ENCODE measurements at regions of chr16 and their contacts with region 1.

Region 1: DNA sequence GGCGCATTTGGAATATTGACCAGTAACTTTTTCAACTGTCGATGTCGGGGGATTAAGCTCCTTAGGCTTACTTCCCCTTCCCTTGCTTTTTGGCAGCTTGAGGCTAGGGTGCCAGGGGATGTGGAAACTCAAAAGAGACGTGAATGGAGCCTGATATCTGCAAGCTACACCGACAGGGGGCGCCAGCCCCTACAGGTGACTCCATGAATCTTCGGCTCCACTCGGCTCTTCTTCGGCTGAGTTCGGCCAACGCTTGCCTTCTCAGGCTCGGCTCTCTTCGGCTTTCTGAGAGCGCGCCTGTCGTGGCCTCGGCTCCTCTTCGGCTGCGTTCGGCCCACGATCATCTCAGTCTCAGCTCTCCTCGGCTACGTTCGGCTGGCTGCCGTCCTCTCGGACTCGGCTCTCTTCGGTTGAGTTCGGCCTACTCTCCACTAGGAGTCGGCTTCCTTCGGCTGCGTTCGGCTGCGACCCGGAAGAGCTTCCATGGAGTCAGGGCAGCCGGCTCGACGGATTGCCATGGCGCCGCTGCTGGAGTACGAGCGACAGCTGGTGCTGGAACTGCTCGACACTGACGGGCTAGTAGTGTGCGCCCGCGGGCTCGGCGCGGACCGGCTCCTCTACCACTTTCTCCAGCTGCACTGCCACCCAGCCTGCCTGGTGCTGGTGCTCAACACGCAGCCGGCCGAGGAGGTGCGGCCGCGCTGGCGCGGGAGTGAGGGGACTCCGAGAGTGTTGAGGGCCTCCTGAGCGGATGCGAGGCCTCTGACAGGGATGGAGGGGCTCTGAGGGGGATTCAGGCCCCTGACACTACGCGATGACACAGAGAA is at the start of gene ERCC4:
- DNase-seq: peak; percentile 99 to 100 (median 100)
- ATAC-seq: peak; percentile 98
- H3K4me3 ChIP-seq: peak within 1 kb of the TSS; percentile 75 to 79
- H3K27ac ChIP-seq: peak within 1 kb of the TSS; percentile 68 to 91 (median 82)
- H3K4me1 ChIP-seq: peaks cover 36% of the 10 kb centered on the region
- H3K27me3 ChIP-seq: no peaks in the 10 kb centered on the region
- CTCF ChIP-seq: peak; percentile 75 to 98 (median 95)
- POLR2A ChIP-seq: peak; percentile 75 to 96 (median 90)
- total RNA-seq, gene ERCC4: 9.2 to 9.9 TPM

Region 2: DNA sequence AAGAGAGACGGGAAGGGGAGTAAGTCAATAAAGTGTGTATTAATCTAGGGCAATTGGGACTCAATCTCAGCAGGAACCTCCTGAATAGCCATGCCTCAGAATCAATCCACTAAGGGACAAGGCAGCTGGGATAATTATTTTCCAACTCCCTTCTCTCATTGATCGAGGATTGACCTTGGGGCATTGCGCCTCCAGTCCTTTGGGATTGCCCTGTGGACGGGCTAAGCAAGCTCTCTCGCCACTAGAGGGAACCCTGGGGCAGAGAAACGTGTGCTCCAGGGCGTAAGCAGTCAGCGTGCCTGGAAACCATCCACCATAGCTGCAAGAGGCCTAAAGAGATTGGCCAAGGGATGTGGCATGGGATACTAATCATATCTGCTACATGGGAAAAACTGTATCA is 53.8 kb before region 1 on chr16:
- intact Hi-C with region 1: loop called (anchors 10 kb)
- DNase-seq: peak; percentile 88 to 93 (median 92)
- ATAC-seq: peak; percentile 98
- H3K4me3 ChIP-seq: no peak overlapping the region
- H3K27ac ChIP-seq: no peak overlapping the region
- H3K4me1 ChIP-seq: peaks cover 6% of the 10 kb centered on the region
- H3K27me3 ChIP-seq: no peaks in the 10 kb centered on the region
- CTCF ChIP-seq: peak; percentile 62 to 92 (median 87)
- POLR2A ChIP-seq: no peak

Region 3: GRCh38 chr16:13961099-13961811 is 41.4 kb after region 1 on chr16:
- intact Hi-C with region 1: no loop called
- DNase-seq: no peak
- ATAC-seq: no peak
- H3K4me3 ChIP-seq: no peak overlapping the region
- H3K27ac ChIP-seq: no peak overlapping the region
- H3K4me1 ChIP-seq: peaks cover 22% of the 10 kb centered on the region
- H3K27me3 ChIP-seq: no peaks in the 10 kb centered on the region
- CTCF ChIP-seq: no peak
- POLR2A ChIP-seq: no peak

Region 4: GRCh38 chr16:14003074-14003570 is 83.2 kb after region 1 on chr16:
- intact Hi-C with region 1: loop called (anchors 10 kb)
- DNase-seq: peak in 3 of 4 donors; percentile 21 to 69 (median 66)
- ATAC-seq: peak; percentile 69
- H3K4me3 ChIP-seq: no peak overlapping the region
- H3K27ac ChIP-seq: peak overlapping the region in 1 of 4 donors; percentile 18
- H3K4me1 ChIP-seq: peaks cover 11% of the 10 kb centered on the region
- H3K27me3 ChIP-seq: no peaks in the 10 kb centered on the region
- CTCF ChIP-seq: peak in 1 of 7 experiments; percentile 61
- POLR2A ChIP-seq: no peak

Region 5: DNA sequence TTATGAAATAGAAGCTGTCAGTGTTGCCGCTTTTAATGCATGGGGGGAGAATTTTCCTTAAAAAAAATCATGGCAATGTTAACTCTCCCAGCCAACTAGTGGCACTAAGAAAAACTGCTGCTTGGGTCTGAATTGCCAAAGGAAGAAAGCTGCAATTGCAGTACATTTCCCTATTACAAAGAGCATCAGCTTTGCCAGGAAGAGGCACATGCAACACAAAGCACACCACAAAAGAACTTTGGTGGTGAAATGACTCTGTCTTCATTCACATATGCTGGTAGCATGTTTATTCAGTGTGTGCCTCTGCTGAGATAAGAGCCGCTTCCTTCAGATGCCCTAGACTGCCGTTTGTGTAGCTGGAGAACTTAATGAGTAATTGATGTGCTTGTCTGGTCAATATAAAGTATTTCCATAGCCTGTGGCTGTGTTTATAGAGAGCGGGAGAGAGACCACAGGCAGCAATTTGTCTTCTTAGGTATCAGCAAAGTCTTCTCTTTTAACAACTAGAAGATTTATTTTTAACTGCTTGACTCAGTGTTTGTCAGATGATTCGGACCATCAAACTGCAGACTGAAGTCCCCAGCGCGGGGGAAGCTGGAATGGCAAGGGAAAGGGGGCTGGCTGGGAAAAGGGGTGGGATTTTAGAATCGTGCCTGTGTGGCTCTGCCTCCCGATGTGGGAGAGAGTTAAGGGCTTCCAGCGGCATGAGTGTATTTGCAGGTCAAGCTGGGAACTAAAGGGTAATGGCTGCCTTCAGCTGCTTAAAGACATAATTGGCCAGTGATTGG is 266.3 kb after region 1 on chr16:
- intact Hi-C with region 1: no loop called
- DNase-seq: peak in 1 of 4 donors; percentile 15
- ATAC-seq: peak; percentile 47
- H3K4me3 ChIP-seq: no peak overlapping the region
- H3K27ac ChIP-seq: peak overlapping the region in 2 of 4 donors; percentile 34 to 36
- H3K4me1 ChIP-seq: peaks cover 16% of the 10 kb centered on the region
- H3K27me3 ChIP-seq: no peaks in the 10 kb centered on the region
- CTCF ChIP-seq: peak in 6 of 7 experiments; percentile 25 to 47 (median 43)
- POLR2A ChIP-seq: peak in 2 of 3 donors; percentile 23 to 32

Region 6: GRCh38 chr16:14284930-14285512 is 365.1 kb after region 1 on chr16:
- intact Hi-C with region 1: loop called (anchors 5 kb)
- DNase-seq: peak in 3 of 4 donors; percentile 71 to 72 (median 72)
- ATAC-seq: peak; percentile 63
- H3K4me3 ChIP-seq: peak overlapping the region; percentile 42 to 80
- H3K27ac ChIP-seq: peak overlapping the region; percentile 68 to 82 (median 76)
- H3K4me1 ChIP-seq: peaks cover 14% of the 10 kb centered on the region
- H3K27me3 ChIP-seq: no peaks in the 10 kb centered on the region
- CTCF ChIP-seq: peak in 4 of 7 experiments; percentile 25 to 55 (median 44)
- POLR2A ChIP-seq: peak in 1 of 3 donors; percentile 4